BJ (cell line): ENCODE measurements at regions of chr7 and their contacts with region 1.

Region 1: DNA sequence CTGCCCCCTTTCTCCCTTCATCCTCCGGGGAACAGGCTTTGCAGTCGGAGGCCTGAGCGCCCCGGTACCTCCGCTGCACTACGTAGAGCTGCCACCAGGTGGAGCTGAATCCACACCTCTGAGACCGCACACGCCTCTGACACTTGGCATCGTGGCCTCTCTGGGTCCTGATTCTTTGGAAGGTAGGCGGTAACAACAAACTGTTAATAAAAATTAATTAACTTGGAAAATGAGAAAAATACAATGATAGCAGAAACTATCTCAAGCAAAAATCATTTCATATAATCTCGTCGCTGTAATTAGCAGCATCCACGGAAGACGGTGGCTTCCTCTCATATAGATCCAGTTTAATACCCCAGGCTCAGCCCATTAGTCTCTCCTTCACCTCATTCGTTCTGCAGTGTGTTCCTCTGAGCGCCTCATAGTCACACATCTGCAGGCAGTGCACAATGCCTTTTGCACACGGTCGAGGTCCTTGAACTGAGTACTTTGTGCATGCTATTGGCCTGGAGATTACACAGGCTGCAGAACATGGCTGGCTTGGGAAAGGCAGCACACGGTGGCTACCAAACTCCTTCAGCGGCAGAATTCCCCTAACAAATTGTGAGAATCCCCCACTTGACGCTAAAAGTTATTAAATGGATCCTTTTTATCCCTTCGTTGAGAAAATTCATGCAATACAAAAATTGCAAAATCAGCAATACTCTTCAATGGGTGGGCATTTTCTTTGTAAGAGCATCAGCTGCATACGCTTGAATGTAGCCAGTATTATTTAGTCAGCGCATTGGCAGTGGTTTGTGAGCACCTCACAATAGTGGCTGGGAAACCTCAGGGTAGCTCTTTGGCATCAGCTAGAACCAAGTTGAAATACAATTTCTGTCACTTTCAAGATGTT is 18.7 kb downstream of the OR9A2 start:
- DNase-seq: no peak
- H3K4me3 ChIP-seq: no peak overlapping the region
- H3K27me3 ChIP-seq: no peaks in the 10 kb centered on the region
- CTCF ChIP-seq: peak; percentile 96

Region 2: DNA sequence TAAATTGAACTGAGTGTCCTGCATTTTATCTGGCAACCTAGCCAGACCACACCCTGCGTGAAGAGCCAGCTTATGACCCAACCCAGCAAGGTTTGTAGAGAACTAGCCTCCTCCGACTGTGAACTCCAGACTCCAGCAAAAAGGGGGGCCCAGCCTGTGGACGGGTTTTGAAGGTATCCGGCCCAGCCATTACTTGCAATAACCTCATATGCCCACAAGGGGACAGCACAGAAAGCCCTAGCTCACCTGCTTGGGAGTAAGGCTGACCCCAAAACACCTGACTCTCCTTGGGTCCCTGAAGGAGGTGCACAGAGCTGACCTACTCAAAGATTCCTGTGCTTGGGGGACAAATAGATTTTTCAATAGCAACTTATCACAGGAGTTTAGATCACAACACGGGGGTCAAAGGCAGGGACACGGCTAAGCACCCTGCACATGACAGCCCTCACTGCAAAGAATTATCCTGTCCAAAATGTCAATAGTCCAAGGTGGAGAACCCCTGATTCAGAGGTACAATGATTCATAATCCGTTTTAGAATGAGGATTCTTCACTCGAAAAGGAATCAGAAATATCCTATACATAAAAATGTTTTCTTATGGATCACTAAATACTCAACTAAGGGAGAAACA is 127.3 kb before region 1 on chr7:
- CTCF ChIA-PET with region 1: interaction called, 17 read pairs
- POLR2A ChIA-PET with region 1: no interaction called
- DNase-seq: no peak
- H3K4me3 ChIP-seq: no peak overlapping the region
- H3K27me3 ChIP-seq: peaks cover 2% of the 10 kb centered on the region
- CTCF ChIP-seq: peak; percentile 86

Region 3: GRCh38 chr7:142992464-142992863 is 15.8 kb before region 1 on chr7:
- CTCF ChIA-PET with region 1: interaction called, 30 read pairs
- POLR2A ChIA-PET with region 1: no interaction called
- DNase-seq: no peak
- H3K4me3 ChIP-seq: no peak overlapping the region
- H3K27me3 ChIP-seq: no peaks in the 10 kb centered on the region
- CTCF ChIP-seq: no peak

Region 4: DNA sequence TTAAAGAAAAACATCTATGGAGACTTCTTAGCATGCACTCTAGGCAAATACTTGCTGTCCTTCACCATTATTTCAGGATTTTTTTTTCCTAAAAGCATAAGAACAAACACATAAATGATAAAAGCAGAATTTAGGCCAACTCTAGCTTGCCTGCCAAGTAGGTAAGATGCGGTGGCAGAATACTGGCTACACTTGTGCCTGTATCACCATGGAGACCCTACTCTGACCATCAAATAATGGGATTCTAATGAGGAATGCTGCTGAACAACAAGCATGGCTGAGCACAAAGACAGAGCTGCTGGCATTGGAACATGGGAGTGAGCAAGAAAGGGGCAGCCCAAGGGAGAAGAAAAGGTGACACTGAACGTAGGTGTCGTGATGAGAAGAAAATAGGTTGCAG is 195.1 kb after region 1 on chr7:
- CTCF ChIA-PET with region 1: interaction called, 13 read pairs
- POLR2A ChIA-PET with region 1: no interaction called
- DNase-seq: no peak
- H3K4me3 ChIP-seq: no peak overlapping the region
- H3K27me3 ChIP-seq: no peaks in the 10 kb centered on the region
- CTCF ChIP-seq: no peak